Calu3 (cell line): ENCODE measurements at regions of chr20 and their contacts with region 1.

Region 1: GRCh38 chr20:50958615-50959542 is at the start of gene MOCS3:
- DNase-seq: peak; percentile 81
- H3K4me3 Mint-ChIP-seq: peak within 1 kb of the TSS; percentile 100
- H3K27ac Mint-ChIP-seq: peak within 1 kb of the TSS; percentile 99
- H3K4me1 Mint-ChIP-seq: peaks cover 24% of the 10 kb centered on the region
- H3K27me3 Mint-ChIP-seq: no peaks in the 10 kb centered on the region
- CTCF ChIP-seq: peak; percentile 14
- total RNA-seq, gene MOCS3: 13.2 and 15.4 TPM in 2 replicates

Region 2: DNA sequence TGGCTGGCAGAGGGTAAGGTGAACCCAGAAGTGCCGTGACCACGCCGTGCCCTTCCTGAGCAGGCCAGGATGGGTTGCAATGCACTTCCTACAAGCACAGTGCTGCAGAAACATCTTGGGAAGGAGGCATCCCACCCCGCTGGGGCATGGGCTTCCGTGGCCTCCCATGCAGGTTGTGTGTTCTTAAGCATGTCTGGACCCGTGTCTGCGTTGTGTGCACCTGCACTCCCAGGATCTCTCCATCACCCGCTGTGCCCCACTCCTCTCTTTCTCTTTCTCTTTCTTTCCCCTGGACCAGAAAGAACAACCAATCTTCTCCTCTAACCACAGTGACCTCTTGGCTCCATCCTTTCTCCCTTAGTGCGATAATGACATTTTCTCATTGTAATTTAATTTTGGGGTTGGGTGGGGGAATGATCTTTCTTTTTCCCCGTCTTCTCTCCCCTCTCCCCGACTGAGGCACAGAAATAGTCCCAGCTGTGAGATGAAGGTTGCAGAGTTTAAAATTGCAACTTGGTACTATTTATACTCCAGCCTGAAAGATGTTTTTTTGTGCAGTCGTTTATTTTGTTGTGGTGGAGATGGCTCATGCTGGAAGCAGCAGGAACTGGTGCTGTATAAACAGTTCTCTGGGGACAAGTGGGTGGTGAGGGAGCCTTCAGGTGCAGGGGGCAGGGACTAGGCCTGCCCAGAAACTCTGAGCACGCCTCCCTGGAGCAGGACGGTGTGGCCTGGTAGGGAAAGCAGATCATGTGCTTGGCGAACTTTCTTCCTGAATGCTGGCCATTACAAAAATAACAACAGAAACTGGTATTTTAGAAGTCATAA is 143.5 kb before region 1 on chr20:
- CTCF ChIA-PET with region 1: interaction called, 4 read pairs
- intact Hi-C with region 1: loop called (anchors 5 kb)
- DNase-seq: peak; percentile 24
- H3K4me3 Mint-ChIP-seq: no peak overlapping the region
- H3K27ac Mint-ChIP-seq: no peak overlapping the region
- H3K4me1 Mint-ChIP-seq: peaks cover 19% of the 10 kb centered on the region
- H3K27me3 Mint-ChIP-seq: no peaks in the 10 kb centered on the region
- CTCF ChIP-seq: no peak

Region 3: DNA sequence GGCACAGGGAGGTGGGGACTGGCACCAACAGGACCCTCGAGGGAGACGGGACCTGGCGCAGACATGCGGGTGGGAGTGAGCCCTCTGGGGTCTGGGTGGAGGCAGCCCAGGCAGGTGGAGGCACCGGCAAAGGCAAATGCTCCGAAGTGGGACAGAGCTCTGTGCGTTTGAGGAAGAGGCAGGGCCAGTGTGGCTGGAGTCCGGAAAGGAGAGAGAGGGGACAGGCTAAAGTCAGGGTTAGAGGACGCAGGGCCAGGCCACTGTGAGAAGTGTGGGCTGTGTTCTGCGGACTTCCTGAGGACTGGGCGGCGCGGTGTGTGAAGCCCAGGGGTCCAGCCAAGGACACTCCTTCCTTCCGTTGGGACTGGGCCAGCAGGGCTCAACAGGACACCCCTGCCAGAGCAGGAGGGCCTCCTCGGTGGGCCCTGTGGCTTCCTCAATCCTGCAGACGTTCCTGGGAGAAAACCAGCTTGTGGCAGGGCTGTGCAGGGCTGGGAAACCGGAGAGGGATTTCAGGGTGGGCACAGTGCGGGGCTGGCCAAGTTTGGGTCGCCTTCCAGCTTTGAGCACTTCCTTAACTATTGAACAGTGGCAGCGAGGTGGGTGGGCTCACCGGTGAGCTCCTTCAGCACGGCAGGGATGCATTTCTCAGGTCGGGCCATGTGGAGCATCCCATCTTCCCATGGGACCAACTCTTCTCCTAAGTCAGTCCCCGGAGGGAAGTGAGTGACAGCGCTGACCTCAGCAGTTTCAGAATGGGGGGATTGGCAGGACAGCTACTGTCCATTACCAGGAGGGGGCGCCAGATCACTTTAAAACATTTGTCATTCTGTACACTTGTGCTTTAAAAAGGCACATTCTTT is 22.2 kb after region 1 on chr20:
- CTCF ChIA-PET with region 1: interaction called, 10 read pairs
- intact Hi-C with region 1: no loop called
- DNase-seq: peak; percentile 88
- H3K4me3 Mint-ChIP-seq: peak overlapping the region; percentile 6
- H3K27ac Mint-ChIP-seq: peak overlapping the region; percentile 67
- H3K4me1 Mint-ChIP-seq: peaks cover 40% of the 10 kb centered on the region
- H3K27me3 Mint-ChIP-seq: peaks cover 67% of the 10 kb centered on the region
- CTCF ChIP-seq: peak; percentile 95